Pancreas (tissue), 10 donors: ENCODE measurements at regions of chr1 and their contacts with region 1.

Region 1: GRCh38 chr1:22406742-22407472 is 44.7 kb upstream of the ZBTB40 start:
- DNase-seq: no peak
- ATAC-seq: no peak
- H3K4me3 ChIP-seq: no peak overlapping the region
- H3K27ac ChIP-seq: no peak overlapping the region
- H3K4me1 ChIP-seq: no peaks in the 10 kb centered on the region
- H3K27me3 ChIP-seq: no peaks in the 10 kb centered on the region
- CTCF ChIP-seq: no peak

Region 2: DNA sequence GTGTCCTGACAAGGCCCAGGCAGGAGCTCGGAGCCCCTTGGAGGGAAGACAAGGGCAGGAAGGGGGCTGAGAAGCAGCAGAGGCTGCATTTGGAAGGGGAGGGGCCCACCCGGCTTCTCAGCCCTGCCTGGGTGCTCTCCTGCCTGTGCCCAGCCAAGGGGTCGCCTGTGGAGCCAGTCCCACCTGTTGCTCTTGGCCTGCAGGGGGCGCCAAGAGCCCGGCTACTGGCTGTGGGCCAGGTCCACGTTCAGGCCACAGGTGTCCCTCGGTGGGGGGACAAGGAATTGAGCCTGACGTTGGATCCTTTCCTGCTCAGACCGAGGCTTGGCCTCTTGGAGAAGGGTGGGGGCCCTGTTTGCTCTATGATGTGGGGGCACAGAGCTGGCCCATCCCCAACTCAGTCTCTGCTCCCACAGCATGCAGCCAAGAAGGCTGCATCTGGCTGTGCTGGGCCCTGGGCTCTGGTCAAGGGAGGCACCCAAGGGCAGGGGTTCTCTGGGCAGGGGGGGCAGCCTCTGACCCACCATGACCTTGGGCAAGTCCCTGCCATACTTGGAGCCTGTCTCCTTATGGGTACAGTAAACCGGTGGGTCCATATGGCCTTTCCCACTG is 274.9 kb before region 1 on chr1:
- intact Hi-C with region 1: loop called in 2 of 3 experiments (anchors 10 kb)
- DNase-seq: peak in 5 of 6 donors; percentile 37 to 89 (median 71)
- ATAC-seq: peak; percentile 72 to 85 (median 76)
- H3K4me3 ChIP-seq: no peak overlapping the region
- H3K27ac ChIP-seq: no peak overlapping the region
- H3K4me1 ChIP-seq: no peaks in the 10 kb centered on the region
- H3K27me3 ChIP-seq: no peaks in the 10 kb centered on the region
- CTCF ChIP-seq: peak; percentile 75 to 82 (median 78)